Naive thymus-derived CD8-positive, alpha-beta T cell (primary cell): ENCODE measurements at regions of chr15 and their contacts with region 1.

Region 1: GRCh38 chr15:78108299-78109084 is 16.1 kb downstream of the SH2D7 start:
- DNase-seq: peak; percentile 75 to 91 (median 82)
- ATAC-seq: peak; percentile 79 to 89
- H3K4me3 Mint-ChIP-seq: no peak overlapping the region
- H3K27ac Mint-ChIP-seq: peak overlapping the region in 6 of 10 donors; percentile 35 to 83 (median 70)
- H3K4me1 Mint-ChIP-seq: peaks cover 22 to 44% (median 38%) of the 10 kb centered on the region in 4 donors
- H3K27me3 Mint-ChIP-seq: no peaks in the 10 kb centered on the region

Region 2: GRCh38 chr15:78000091-78000926 is 108.2 kb before region 1 on chr15:
- POLR2A ChIA-PET with region 1: interaction called, 12 read pairs
- DNase-seq: peak; percentile 66 to 87 (median 78)
- ATAC-seq: peak; percentile 99 to 100
- H3K4me3 Mint-ChIP-seq: no peak overlapping the region
- H3K27ac Mint-ChIP-seq: peak overlapping the region; percentile 2 to 89 (median 58)
- H3K4me1 Mint-ChIP-seq: peaks cover 4 to 14% (median 10%) of the 10 kb centered on the region in 4 donors
- H3K27me3 Mint-ChIP-seq: no peaks in the 10 kb centered on the region